ENCODE measurements at regions of chr1 and their contacts with region 1.

Region 1: DNA sequence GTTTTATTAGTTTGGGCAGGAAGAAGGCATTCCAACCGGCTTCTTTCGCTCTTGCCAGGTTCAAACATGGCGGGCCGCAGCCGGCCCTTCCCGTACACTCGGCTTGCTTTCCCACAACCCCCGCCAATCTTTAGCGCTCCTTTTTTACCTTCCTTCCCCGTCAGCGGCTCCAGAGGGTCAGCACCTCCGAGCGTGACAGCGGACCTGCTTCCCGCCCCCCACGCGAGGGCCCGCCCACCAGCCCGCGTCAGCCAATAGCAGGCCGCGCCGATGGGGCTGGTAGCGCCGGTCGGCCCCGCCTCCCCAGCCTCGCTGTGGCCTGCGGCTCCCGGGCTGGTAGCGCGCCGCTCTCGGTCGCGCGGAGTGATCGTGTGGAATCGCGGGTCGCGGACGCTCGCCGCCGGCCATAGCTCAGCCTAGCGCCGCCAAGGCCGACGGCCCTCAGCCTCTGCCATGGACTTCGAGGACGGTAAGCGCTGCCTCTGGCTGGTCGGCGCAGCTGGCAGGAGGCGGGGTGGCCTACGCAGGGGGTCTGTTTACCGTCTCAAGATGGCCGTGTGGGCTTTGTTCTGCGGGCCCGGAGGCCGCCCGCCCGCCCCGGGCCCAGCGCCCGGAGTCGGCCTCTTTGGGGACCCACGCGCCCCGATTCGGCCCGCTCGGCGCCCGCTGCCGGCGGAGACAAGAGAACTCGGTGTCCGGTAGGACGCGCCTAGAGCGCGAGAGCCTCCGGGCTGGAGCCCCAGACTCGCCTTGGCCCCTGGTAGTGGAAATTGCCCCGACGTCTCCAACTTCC is at the start of gene ZNF326:
- DNase-seq: peak; percentile 81 to 97
- H3K4me3 ChIP-seq: peak within 1 kb of the TSS; percentile 71 to 93
- H3K27ac ChIP-seq: peak within 1 kb of the TSS; percentile 85 to 97
- H3K4me1 ChIP-seq: peaks cover 0 to 17% of the 10 kb centered on the region in 2 donors
- H3K27me3 ChIP-seq: no peaks in the 10 kb centered on the region
- CTCF ChIP-seq: peak in 1 of 3 experiments; percentile 9
- total RNA-seq, gene ZNF326: 0.75 TPM

Region 2: DNA sequence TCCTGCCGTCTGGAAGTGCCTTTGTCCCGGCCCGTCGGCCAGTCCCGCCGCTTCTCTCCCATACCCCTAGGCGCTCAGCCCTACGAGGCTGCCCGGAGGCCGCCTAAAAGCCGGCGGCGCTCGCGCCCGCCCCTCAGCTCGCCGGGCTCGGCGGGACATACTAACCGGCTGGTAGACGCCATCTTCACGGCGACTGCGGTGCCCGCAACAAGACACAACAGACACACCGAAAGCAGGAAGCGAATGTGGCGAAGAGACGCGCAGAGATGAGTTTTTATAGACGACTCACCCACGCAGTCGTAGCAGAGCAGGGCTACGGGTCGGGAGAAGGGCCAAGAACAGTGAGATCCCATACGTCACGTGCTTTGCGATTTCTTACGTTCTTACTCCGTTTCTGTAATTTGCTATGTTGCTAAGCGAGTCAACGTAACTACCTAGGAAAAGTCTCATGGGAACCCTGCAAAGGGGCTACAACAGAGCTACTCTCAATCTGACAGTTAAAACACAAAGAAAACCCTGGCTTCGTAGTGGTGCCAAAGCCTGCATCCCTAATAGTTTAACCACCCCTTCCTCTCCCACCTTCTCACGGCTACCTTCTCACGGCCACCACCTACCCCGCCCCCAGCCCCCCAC is 1103.6 kb before region 1 on chr1 and contains the start of gene GTF2B:
- intact Hi-C with region 1: loop called (anchors 5 kb)
- DNase-seq: peak; percentile 78 to 96
- H3K4me3 ChIP-seq: peak within 1 kb of the TSS; percentile 62 to 95
- H3K27ac ChIP-seq: peak within 1 kb of the TSS; percentile 91 to 99
- H3K4me1 ChIP-seq: peaks cover 2 to 11% of the 10 kb centered on the region in 2 donors
- H3K27me3 ChIP-seq: no peaks in the 10 kb centered on the region
- CTCF ChIP-seq: peak in 1 of 3 experiments; percentile 6
- total RNA-seq, gene GTF2B: 13.7 TPM

Region 3: GRCh38 chr1:89524369-89525168 is 470.4 kb before region 1 on chr1 and contains the start of gene LRRC8B:
- intact Hi-C with region 1: loop called (anchors 5 kb)
- DNase-seq: peak; percentile 49 to 92
- H3K4me3 ChIP-seq: peak within 1 kb of the TSS; percentile 94 to 99
- H3K27ac ChIP-seq: peak within 1 kb of the TSS; percentile 53 to 74
- H3K4me1 ChIP-seq: peaks cover 0 to 6% of the 10 kb centered on the region in 2 donors
- H3K27me3 ChIP-seq: no peaks in the 10 kb centered on the region
- CTCF ChIP-seq: peak in 1 of 3 experiments; percentile 8
- total RNA-seq, gene LRRC8B: 4.2 TPM

Region 4: GRCh38 chr1:89632657-89633247 is 362.2 kb before region 1 on chr1 and contains the start of gene LRRC8C:
- intact Hi-C with region 1: loop called (anchors 5 kb)
- DNase-seq: peak; percentile 47 to 90
- H3K4me3 ChIP-seq: peak within 1 kb of the TSS; percentile 89 to 98
- H3K27ac ChIP-seq: peak within 1 kb of the TSS; percentile 89 to 95
- H3K4me1 ChIP-seq: no peaks in the 10 kb centered on the region
- H3K27me3 ChIP-seq: no peaks in the 10 kb centered on the region
- CTCF ChIP-seq: peak; percentile 4 to 88 (median 18)
- total RNA-seq, gene LRRC8C: 7.5 TPM

Region 5: GRCh38 chr1:89820422-89821321 is 174.3 kb before region 1 on chr1 and contains the start of gene LRRC8D:
- intact Hi-C with region 1: loop called (anchors 5 kb)
- DNase-seq: peak; percentile 33 to 88
- H3K4me3 ChIP-seq: peak within 1 kb of the TSS; percentile 90 to 91
- H3K27ac ChIP-seq: peak within 1 kb of the TSS; percentile 36 to 67
- H3K4me1 ChIP-seq: peaks cover 0 to 3% of the 10 kb centered on the region in 2 donors
- H3K27me3 ChIP-seq: no peaks in the 10 kb centered on the region
- CTCF ChIP-seq: peak in 1 of 3 experiments; percentile 11
- total RNA-seq, gene LRRC8D: 1.3 TPM

Region 6: DNA sequence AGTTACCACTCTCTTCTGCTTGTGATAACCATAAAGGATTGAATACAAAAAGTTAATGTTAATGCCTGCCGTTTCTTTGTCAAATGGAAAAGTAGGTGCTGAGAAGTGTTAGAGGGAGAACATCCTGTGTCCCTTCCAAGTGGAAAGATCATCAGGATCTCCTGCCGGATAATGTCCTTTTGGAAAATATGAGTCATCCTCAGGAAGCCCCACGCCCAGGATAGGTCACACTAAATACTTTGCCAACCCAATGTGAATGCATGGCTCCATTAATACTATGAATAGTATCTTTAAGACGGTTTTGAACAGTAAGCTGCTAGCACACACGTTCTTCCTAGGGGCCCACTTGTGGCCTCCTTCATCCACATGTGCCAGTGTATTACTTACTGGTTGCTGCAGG is 279.4 kb after region 1 on chr1:
- intact Hi-C with region 1: loop called (anchors 10 kb)
- DNase-seq: no peak
- H3K4me3 ChIP-seq: no peak overlapping the region
- H3K27ac ChIP-seq: no peak overlapping the region
- H3K4me1 ChIP-seq: no peaks in the 10 kb centered on the region
- H3K27me3 ChIP-seq: no peaks in the 10 kb centered on the region
- CTCF ChIP-seq: no peak

Region 7: DNA sequence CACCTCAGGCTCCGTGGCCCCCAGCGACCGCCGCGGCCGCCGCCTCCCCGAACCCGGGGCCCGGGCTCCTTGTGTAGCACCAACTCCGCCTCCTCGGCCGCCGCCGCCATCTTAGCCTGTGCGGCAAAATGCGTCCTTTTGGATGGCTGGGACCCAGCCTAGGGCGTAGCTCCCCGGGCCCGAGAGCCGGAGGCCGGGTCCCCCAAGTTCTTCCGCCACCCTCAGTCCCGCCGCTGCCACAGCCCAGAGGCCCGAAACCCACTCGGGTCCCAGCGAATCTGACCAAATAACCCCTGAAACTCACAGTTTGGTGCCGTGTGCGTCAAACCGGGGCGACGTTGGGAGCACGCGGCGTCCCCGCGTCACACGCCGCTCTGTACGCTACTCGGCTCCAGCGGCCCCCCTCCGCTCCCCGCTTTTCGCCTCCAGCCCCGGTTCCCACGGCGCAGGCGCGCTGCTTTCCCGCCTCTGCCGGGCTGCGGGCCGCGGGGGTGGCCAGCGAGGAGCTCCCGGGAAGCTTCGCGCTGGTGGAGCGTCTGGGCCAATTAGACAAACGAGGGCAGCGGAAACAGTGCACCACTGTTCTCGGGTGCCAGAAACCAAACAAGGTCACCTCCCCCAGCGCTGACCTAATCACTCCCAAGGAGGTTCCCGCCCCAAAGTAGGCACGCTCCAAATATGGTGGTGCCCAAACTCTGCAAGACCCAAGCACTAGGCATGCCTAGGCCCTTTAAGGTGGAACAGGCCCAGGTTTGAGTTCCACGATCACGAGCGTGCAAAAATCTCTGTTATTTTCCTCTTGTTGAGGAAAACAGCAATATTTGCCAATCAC is 1026.9 kb after region 1 on chr1 and contains the start of gene ZNF644:
- intact Hi-C with region 1: loop called (anchors 2 kb)
- DNase-seq: peak; percentile 78 to 98
- H3K4me3 ChIP-seq: peak within 1 kb of the TSS; percentile 72 to 84
- H3K27ac ChIP-seq: peak within 1 kb of the TSS; percentile 96 to 100
- H3K4me1 ChIP-seq: peaks cover 4 to 13% of the 10 kb centered on the region in 2 donors
- H3K27me3 ChIP-seq: no peaks in the 10 kb centered on the region
- CTCF ChIP-seq: no peak
- total RNA-seq, gene ZNF644: 17.1 TPM